IMR-90 (cell line): ENCODE measurements at regions of chr7 and their contacts with region 1.

Region 1: DNA sequence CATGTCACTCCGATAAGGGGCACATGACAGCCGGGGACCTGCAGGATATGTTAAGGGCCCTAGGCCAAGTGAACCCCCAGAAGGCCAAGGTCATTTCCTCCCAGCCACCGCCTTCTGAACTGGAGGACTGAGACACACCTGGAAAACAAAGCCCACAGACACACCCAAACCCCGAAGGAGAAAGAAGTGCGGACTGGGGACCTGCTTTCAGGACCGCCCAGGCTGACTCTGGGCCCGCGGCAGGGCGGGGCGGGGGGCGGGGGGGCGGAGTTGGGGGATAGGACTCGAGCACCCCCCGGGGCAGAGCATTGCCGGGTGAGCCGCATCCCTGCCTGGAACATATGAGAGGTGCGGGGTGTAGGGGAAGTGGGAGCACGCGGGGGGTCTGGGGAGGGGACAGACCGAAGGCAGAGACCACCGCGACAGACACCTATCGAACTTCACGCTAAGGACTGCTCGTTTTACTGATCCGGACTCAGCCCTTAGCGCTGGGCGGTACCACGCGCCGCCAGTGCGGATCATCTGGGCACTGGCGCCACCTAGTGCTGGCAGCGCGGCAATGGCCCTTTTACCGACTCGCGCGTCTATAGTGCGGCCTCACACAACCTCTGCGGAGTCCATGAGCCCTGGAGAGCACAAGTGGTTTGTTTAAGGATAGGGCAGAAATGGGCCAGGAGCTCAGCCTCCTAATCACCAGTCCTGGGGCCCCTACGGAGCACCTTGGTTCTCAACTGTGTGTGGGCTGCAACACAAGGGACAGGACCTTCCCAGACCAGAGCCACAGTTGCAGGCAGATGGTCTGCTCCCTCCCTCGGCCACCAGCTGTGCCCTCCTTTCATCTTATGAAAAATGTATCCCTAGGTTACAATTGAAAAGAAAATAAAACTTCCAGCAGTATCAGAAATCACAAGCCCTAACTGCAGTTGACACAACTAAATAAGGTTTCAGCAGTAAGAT is 157.6 kb downstream of the HERPUD2 start:
- DNase-seq: peak; percentile 47
- ATAC-seq: peak; percentile 100
- H3K4me3 ChIP-seq: peak overlapping the region; percentile 27
- H3K27ac ChIP-seq: no peak overlapping the region
- H3K4me1 ChIP-seq: no peaks in the 10 kb centered on the region
- H3K27me3 ChIP-seq: peaks cover 17% of the 10 kb centered on the region
- CTCF ChIP-seq: peak; percentile 95
- POLR2A ChIP-seq: no peak
- RAD21 ChIP-seq: peak; percentile 84

Region 2: GRCh38 chr7:34759452-34760125 is 777.8 kb before region 1 on chr7:
- CTCF ChIA-PET with region 1: no interaction called
- POLR2A ChIA-PET with region 1: no interaction called
- dilution Hi-C with region 1: no loop called
- in situ Hi-C with region 1: no loop called
- intact Hi-C with region 1: loop called (anchors 10 kb)
- DNase-seq: peak; percentile 45
- ATAC-seq: peak; percentile 88
- H3K4me3 ChIP-seq: no peak overlapping the region
- H3K27ac ChIP-seq: no peak overlapping the region
- H3K4me1 ChIP-seq: no peaks in the 10 kb centered on the region
- H3K27me3 ChIP-seq: no peaks in the 10 kb centered on the region
- CTCF ChIP-seq: peak; percentile 57
- POLR2A ChIP-seq: no peak
- RAD21 ChIP-seq: peak; percentile 44

Region 3: DNA sequence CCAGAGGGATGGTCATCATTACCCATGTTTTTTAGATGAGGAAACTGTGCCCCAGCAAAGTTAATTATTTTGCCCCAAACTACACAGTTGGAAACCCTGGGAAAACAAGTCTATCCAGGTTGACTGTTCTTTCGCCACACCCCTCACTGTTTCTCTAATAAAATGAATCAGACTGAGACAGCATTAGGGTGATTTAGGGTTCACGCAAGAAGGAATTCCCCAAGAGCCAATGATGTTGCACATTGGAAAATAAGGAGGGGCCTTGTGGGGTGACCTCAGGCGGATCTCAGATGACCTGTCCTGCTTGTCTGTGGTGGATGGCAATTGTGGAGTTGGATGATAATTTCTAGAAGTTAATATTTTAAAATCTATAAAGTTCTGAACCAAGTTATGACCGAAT is 147.7 kb before region 1 on chr7:
- CTCF ChIA-PET with region 1: no interaction called
- POLR2A ChIA-PET with region 1: no interaction called
- dilution Hi-C with region 1: no loop called
- in situ Hi-C with region 1: no loop called
- intact Hi-C with region 1: no loop called
- DNase-seq: no peak
- ATAC-seq: no peak
- H3K4me3 ChIP-seq: no peak overlapping the region
- H3K27ac ChIP-seq: no peak overlapping the region
- H3K4me1 ChIP-seq: no peaks in the 10 kb centered on the region
- H3K27me3 ChIP-seq: no peaks in the 10 kb centered on the region
- CTCF ChIP-seq: no peak
- POLR2A ChIP-seq: no peak
- RAD21 ChIP-seq: no peak

Region 4: DNA sequence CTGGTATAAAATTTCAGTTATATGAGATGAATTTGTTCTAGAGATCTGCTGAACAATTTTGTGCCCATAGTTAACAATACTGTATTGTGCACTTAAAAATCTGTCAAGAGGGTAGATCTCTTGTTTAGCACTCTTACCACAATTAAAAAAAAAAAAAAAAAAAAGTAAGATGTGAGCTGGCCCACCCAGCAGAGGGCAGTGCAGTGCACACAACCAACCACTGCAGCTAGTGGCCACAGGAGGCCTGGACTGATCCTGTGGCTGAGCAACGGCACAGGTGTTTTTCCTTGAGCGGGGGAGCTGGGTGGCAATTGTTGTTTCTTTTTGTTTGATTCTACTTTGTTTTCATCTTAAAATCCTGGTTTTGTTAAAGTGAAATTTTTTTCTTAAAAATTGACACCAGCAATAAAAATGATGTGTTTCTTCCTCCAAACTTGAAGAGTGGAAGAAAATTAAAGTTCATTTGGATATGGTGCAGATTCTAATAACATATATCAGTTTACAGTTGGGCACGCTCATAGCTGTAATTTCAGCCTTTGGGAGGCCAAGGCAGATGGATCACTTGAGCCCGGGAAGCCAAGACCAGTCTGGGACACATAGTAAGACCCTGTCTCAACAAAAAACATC is 112.4 kb before region 1 on chr7:
- CTCF ChIA-PET with region 1: no interaction called
- POLR2A ChIA-PET with region 1: no interaction called
- dilution Hi-C with region 1: no loop called
- in situ Hi-C with region 1: no loop called
- intact Hi-C with region 1: loop called (anchors 1 kb)
- DNase-seq: peak; percentile 43
- ATAC-seq: peak; percentile 89
- H3K4me3 ChIP-seq: no peak overlapping the region
- H3K27ac ChIP-seq: no peak overlapping the region
- H3K4me1 ChIP-seq: no peaks in the 10 kb centered on the region
- H3K27me3 ChIP-seq: no peaks in the 10 kb centered on the region
- CTCF ChIP-seq: peak; percentile 75
- POLR2A ChIP-seq: no peak
- RAD21 ChIP-seq: peak; percentile 57

Region 5: DNA sequence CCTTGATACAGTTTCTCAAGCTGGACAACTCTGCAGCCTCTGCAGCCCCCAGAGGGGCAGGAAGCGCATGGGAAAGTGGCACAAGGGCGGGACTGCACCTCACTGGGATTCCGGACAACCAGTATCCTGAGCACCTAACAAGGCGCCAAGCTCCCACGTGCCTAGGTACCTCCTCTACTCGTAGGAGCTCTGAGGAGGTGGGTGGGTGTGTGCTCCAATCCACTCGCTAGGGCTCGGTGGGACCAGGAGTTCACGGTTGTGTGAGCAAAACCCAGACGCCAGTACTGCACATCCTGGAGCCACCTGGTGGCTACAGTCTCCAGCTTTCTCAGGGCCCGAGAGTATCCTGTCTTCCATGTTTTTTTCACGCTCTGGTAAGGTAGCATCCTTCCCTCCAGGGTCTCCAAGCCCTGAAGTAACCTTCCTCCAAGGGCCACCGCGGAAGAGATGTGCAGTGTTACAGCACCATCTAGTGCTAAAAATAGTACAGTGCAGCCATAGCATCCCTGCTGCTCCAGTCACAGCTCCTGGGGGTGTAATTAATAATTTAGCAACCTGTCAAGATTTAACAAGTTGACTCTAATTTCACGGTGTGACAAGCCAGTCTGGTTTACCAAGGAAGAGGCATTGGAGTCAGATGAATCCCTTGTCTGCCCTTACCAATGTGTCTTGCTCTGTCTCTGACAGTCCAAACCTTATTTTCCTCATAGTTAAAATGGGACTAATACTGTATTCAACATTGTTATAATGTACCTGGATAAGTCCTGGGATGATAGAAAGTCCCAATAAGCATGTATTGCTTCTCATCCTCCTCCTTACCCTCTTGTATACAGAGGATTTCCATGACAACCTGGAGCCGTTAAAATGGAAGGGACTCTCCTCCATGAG is 87.2 kb after region 1 on chr7:
- CTCF ChIA-PET with region 1: interaction called, 3 read pairs
- POLR2A ChIA-PET with region 1: no interaction called
- dilution Hi-C with region 1: no loop called
- in situ Hi-C with region 1: no loop called
- intact Hi-C with region 1: loop called (anchors 2 kb)
- DNase-seq: peak; percentile 29
- ATAC-seq: peak; percentile 97
- H3K4me3 ChIP-seq: no peak overlapping the region
- H3K27ac ChIP-seq: no peak overlapping the region
- H3K4me1 ChIP-seq: no peaks in the 10 kb centered on the region; the same call in 1 of the 2 replicates
- H3K27me3 ChIP-seq: no peaks in the 10 kb centered on the region
- CTCF ChIP-seq: peak; percentile 79
- POLR2A ChIP-seq: no peak
- RAD21 ChIP-seq: peak; percentile 82

Region 6: DNA sequence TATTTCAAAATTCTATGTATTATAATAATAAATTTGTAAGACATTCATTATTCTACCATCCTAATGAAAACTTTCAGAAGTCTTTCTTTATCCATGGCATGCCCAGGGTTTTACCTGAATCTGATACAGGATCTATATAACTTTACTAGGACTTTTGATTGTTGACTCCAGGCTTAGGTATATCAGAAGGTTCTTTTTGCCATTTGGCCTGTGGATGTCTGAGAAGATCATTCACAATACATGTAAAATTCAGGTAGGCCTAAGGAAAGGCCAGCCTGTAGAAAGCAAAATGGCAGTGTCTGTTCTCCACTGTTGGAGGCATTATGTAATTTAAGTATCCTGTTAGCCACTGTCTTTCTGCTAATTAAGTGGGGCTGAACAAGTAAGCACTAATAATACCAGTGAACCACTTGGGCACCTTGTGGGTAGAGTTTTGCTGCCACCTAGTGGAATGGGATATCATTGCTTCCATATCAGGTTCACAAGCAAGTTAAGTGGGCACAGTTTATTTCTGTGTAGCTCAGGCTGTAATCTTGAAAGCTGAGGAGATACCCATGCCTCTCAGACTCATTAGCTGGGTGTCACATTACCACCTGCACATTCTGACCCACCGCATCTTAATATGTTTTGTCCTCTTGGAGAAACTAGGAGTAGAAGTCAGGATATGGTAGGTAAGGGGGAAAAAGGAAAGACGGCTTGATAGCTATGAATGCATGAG is 369.0 kb after region 1 on chr7:
- CTCF ChIA-PET with region 1: no interaction called
- POLR2A ChIA-PET with region 1: no interaction called
- dilution Hi-C with region 1: no loop called
- in situ Hi-C with region 1: no loop called
- intact Hi-C with region 1: loop called (anchors 5 kb)
- DNase-seq: peak; percentile 81
- ATAC-seq: peak; percentile 90
- H3K4me3 ChIP-seq: no peak overlapping the region
- H3K27ac ChIP-seq: no peak overlapping the region
- H3K4me1 ChIP-seq: peaks cover 2% of the 10 kb centered on the region; the same call in 1 of the 2 replicates
- H3K27me3 ChIP-seq: no peaks in the 10 kb centered on the region
- CTCF ChIP-seq: peak; percentile 87
- POLR2A ChIP-seq: peak; percentile 40; the same call in 1 of the 2 replicates
- RAD21 ChIP-seq: peak; percentile 88